ENCODE measurements at regions of chr7 and their contacts with region 1.

Region 1: DNA sequence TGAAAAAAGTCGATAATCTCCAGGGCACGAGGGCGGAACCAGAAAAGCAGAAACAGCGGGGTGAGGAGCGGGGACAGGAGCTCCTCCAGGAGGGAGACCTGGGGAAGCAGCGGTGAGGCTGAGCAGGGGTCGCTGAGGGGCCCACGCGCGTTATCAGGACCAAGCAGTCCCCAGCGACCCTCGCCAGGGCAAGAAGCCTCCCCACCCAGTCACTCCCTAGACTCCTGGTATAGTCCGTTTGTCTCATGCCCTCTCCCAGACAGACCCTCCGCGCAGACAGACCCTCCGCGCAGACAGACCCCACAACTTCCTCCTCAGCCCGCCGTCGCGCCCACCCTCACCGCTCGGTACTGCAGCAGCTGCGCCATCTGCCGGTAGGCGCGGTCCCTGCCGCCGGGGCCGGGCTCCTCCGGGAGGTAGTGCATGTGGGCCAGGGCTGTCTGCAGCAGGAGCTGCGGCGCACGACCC is 6.3 kb downstream of the ATG9B start:
- DNase-seq: peak; percentile 83
- ATAC-seq: peak; percentile 68
- H3K4me3 ChIP-seq: peak overlapping the region in 4 of 5 experiments; percentile 34 to 51 (median 42)
- H3K4me3 Mint-ChIP-seq: peak overlapping the region; percentile 91
- H3K27ac ChIP-seq: no peak overlapping the region
- H3K27ac Mint-ChIP-seq: peak overlapping the region; percentile 72
- H3K4me1 ChIP-seq: peaks cover 33 to 44% of the 10 kb centered on the region in 2 donors
- H3K4me1 Mint-ChIP-seq: peaks cover 47% of the 10 kb centered on the region
- H3K27me3 ChIP-seq: peaks cover 0 to 47% (median 21%) of the 10 kb centered on the region in 4 experiments
- H3K27me3 Mint-ChIP-seq: peaks cover 28% of the 10 kb centered on the region
- CTCF ChIP-seq: peak; percentile 98

Region 2: DNA sequence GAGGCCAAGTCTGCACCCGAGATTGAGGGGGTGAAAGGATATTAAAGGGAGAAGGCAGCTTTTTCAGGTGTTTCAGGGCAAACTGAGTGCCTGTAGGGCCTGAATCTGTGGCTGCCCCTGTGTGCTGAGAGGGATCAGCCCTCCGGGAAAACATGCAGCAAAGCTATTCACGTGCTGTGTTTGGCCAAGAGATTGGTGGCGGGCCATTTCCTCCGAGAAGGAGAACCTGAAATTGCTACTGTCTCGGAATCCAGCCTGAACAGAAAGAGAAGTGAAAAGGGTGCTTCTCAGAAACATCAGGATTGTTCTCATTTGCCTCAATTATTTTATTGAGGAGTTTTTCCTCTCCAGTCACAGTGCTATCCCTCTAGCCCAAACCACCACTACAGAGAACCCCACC is 264.7 kb before region 1 on chr7:
- CTCF ChIA-PET with region 1: no interaction called
- POLR2A ChIA-PET with region 1: no interaction called
- intact Hi-C with region 1: no loop called
- DNase-seq: no peak
- ATAC-seq: no peak
- H3K4me3 ChIP-seq: no peak overlapping the region
- H3K4me3 Mint-ChIP-seq: no peak overlapping the region
- H3K27ac ChIP-seq: no peak overlapping the region
- H3K27ac Mint-ChIP-seq: no peak overlapping the region
- H3K4me1 ChIP-seq: peaks cover 10% of the 10 kb centered on the region in 2 donors
- H3K4me1 Mint-ChIP-seq: peaks cover 11% of the 10 kb centered on the region
- H3K27me3 ChIP-seq: peaks cover 0 to 4% (median 0%) of the 10 kb centered on the region in 4 experiments
- H3K27me3 Mint-ChIP-seq: peaks cover 17% of the 10 kb centered on the region
- CTCF ChIP-seq: no peak

Region 3: GRCh38 chr7:150898475-150899011 is 119.4 kb before region 1 on chr7:
- CTCF ChIA-PET with region 1: interaction called, 8 read pairs
- POLR2A ChIA-PET with region 1: no interaction called
- intact Hi-C with region 1: loop called (anchors 1 kb)
- DNase-seq: peak; percentile 79
- ATAC-seq: peak; percentile 70
- H3K4me3 ChIP-seq: peak overlapping the region in 2 of 5 experiments; percentile 29 to 39
- H3K4me3 Mint-ChIP-seq: peak overlapping the region; percentile 51
- H3K27ac ChIP-seq: peak overlapping the region in 1 of 2 donors; percentile 81
- H3K27ac Mint-ChIP-seq: peak overlapping the region; percentile 28
- H3K4me1 ChIP-seq: peaks cover 26 to 55% of the 10 kb centered on the region in 2 donors
- H3K4me1 Mint-ChIP-seq: peaks cover 38% of the 10 kb centered on the region
- H3K27me3 ChIP-seq: peaks cover 0 to 18% (median 9%) of the 10 kb centered on the region in 4 experiments
- H3K27me3 Mint-ChIP-seq: peaks cover 44% of the 10 kb centered on the region
- CTCF ChIP-seq: peak; percentile 96

Region 4: DNA sequence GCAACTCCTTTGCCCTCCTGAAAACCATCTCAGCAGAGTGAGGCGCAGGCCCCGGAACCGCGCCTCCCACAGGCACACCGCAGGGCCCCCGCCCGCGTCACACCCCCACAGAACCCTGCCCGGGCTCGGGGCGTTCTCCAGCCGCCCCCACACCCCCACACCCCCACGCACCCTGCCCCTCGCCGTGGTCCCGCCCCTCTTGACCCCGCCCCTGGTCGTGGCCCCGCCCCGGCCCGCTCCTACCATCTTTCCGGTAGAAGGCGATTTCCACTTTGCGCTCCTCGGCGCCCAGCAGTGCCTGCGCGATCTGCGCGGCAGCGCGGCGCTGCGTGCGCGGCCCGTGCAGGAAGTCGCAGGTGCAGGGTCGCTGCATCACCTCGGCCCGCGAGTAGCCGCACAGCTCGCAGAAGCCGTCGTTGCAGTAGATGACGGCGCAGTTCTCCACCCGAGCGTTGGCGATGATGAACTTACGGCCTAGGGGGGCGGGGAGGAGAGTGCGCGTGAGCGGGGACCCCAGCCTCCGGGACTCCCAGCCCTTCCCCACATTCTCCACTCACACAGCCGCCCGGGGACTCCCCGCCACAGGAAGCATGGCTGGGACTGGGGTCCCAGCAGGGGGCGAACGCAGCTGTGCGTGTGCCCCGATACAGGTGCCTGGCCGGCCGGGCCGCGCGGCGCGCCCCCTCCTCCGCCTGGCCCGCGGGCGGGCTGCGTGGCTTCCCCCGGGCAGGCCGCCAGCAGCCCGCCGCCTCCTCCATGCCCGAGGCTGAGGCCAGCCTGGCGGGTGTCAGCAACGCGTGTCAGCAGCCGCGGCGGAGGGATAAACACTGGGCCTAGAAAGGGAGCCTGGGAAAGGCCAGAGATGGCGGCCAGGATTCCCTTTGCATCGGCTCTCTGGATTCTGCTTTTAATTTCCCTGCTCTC is 43.3 kb before region 1 on chr7:
- CTCF ChIA-PET with region 1: interaction called, 7 read pairs
- POLR2A ChIA-PET with region 1: no interaction called
- intact Hi-C with region 1: loop called (anchors 2 kb)
- DNase-seq: peak; percentile 81
- ATAC-seq: peak; percentile 71
- H3K4me3 ChIP-seq: peak overlapping the region; percentile 21 to 74 (median 60)
- H3K4me3 Mint-ChIP-seq: peak overlapping the region; percentile 94
- H3K27ac ChIP-seq: peak overlapping the region in 1 of 2 donors; percentile 64
- H3K27ac Mint-ChIP-seq: peak overlapping the region; percentile 87
- H3K4me1 ChIP-seq: peaks cover 37 to 42% of the 10 kb centered on the region in 2 donors
- H3K4me1 Mint-ChIP-seq: peaks cover 43% of the 10 kb centered on the region
- H3K27me3 ChIP-seq: peaks cover 0 to 41% (median 28%) of the 10 kb centered on the region in 4 experiments
- H3K27me3 Mint-ChIP-seq: peaks cover 19% of the 10 kb centered on the region
- CTCF ChIP-seq: peak; percentile 33

Region 5: DNA sequence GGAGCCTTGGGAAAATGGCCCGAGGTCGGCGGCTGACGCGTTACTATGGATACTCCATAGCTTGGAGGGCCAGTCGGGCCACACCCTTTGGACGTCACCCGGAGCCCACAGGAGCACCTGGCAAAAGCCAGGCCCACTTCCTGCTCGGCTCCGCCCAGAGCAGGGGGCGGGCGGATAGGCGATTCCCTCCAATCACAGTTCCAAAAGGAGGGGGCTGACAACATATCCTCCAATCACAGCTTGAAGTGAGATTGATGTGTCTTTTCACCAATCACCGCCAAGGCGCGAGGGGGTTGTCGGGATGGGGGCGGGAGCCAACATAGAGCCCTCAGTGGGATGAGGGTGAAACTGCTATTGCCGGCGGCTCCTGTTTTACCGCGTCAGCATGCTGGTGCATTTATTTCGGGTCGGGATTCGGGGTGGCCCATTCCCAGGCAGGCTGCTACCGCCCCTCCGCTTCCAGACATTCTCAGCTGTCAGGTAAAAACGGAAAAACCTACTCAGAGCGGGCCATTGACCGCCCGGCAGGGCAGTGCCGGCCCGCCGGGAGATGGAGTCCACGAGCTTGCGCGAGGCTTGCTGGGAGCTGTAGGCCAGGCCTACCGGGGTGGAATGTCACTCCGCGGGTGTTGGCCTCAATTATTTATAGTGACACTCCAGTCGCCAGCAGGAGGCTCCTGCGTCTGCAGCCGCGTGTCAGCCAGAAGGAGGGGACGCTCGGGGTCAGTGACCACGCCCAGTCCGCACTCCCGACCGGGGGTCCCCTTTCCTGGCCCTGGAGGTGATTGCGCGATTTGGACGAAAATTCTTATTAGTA is 10.4 kb after region 1 on chr7 and contains the start of gene ABCB8:
- CTCF ChIA-PET with region 1: interaction called, 25 read pairs
- POLR2A ChIA-PET with region 1: interaction called, 12 read pairs
- intact Hi-C with region 1: loop called (anchors 1 kb)
- DNase-seq: peak; percentile 99
- ATAC-seq: peak; percentile 92
- H3K4me3 ChIP-seq: peak within 1 kb of the TSS; percentile 54 to 86 (median 78)
- H3K4me3 Mint-ChIP-seq: peak within 1 kb of the TSS; percentile 97
- H3K27ac ChIP-seq: peak within 1 kb of the TSS; percentile 95 to 96
- H3K27ac Mint-ChIP-seq: peak within 1 kb of the TSS; percentile 99
- H3K4me1 ChIP-seq: peaks cover 11 to 17% of the 10 kb centered on the region in 2 donors
- H3K4me1 Mint-ChIP-seq: peaks cover 23% of the 10 kb centered on the region
- H3K27me3 ChIP-seq: peaks cover 0 to 20% (median 7%) of the 10 kb centered on the region in 4 experiments
- H3K27me3 Mint-ChIP-seq: peaks cover 7% of the 10 kb centered on the region
- CTCF ChIP-seq: peak; percentile 25
- total RNA-seq, gene ABCB8: 64.7 and 69.7 TPM in 2 replicates

Region 6: DNA sequence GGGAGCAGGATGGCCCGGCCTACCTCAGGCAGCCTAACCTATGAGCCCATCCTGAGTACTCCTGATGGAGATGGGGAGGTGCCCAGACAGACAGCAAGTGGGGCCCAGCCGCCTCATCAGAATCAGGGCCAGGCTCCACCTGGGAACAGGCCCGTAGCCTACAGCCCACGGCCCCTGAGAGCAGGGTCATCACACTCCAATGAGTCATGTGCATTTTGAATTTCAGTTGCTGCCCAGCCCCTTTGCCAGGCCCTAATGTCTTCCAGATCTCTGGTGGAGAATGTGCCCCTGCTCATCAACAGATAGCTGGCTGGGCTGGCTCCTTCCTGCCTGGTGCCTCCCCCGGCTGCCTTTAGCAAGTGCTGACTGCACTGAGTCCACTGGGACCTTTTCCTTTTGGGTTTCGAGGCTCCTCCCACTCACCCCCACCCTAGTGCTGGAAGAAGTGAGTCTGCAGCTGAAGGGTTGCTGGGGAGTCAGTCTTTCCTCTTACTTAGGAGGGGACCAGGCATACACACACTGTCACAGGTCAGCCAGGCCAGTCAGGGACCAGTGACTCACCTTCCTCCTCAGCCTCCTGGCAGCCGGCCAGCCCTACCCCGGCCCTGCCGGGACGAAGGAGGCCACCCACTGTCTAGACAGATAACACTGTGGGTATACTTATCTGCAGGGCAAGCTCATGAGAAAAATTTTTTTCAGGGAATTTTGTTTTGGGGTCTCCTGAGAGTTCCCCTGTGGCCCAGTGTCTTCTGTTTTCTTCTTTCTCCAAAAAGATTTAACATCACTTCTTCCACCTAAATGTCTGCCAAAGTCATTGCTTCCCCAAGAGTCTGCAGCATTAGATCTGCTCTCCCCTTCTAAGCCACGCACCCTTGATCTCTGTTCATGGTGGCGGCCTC is 21.2 kb after region 1 on chr7:
- CTCF ChIA-PET with region 1: no interaction called
- POLR2A ChIA-PET with region 1: no interaction called
- intact Hi-C with region 1: no loop called
- DNase-seq: no peak
- ATAC-seq: no peak
- H3K4me3 ChIP-seq: no peak overlapping the region
- H3K4me3 Mint-ChIP-seq: no peak overlapping the region
- H3K27ac ChIP-seq: no peak overlapping the region
- H3K27ac Mint-ChIP-seq: no peak overlapping the region
- H3K4me1 ChIP-seq: no peaks in the 10 kb centered on the region
- H3K4me1 Mint-ChIP-seq: no peaks in the 10 kb centered on the region
- H3K27me3 ChIP-seq: no peaks in the 10 kb centered on the region
- H3K27me3 Mint-ChIP-seq: no peaks in the 10 kb centered on the region
- CTCF ChIP-seq: no peak

Region 7: DNA sequence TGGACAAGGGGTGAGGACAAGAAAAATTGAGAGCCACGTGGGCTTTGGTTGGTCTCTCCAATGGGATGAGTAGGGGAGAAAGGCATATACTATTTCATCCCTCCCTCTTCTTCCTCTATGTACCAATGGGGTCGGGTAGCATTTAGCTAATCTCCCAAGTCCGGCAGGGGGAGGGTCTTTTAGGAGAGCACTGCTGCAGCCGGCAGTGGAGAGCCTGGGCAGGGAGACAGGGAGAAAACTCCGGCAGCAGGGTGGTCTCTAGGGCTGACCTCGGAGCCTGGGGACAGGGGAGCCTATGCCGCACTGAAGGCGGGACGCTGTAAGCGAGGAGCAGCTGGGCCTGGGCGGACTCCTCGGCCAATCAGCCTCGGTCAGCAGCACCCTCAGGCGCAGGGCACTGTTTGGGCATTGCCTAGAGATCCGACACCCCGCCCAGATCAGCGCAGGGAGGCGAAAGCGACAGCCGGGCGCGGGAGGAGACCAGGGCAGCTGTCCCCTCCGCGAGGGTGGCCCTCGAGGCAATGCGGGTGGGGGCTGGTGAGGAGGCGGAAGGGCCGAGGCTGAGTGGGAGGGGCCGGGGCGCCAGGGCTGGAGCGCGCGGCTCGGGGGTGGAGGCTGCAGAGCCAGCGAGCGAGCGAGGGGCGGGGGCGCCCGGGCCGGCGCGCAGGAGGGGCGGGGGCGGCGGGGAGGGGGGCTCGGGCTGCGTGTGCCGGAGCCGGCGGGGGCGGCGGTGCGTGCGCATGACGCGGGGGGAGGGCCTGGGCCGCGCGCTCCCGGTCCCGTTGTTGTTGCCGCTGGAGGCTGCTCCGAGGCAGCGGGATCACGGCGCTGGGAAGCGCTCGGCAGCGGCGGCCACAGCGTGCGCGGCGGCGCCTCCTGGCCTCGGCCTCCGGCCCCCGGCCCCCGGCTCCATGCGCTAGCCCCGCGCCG is 68.0 kb after region 1 on chr7 and contains the start of gene AGAP3:
- CTCF ChIA-PET with region 1: interaction called, 3 read pairs
- POLR2A ChIA-PET with region 1: interaction called, 4 read pairs
- intact Hi-C with region 1: loop called (anchors 5 kb)
- DNase-seq: peak; percentile 59
- ATAC-seq: peak; percentile 40
- H3K4me3 ChIP-seq: peak within 1 kb of the TSS in 4 of 5 experiments; percentile 47 to 75 (median 68)
- H3K4me3 Mint-ChIP-seq: peak within 1 kb of the TSS; percentile 91
- H3K27ac ChIP-seq: peak within 1 kb of the TSS in 1 of 2 donors; percentile 33
- H3K27ac Mint-ChIP-seq: peak within 1 kb of the TSS; percentile 77
- H3K4me1 ChIP-seq: peaks cover 58 to 59% of the 10 kb centered on the region in 2 donors
- H3K4me1 Mint-ChIP-seq: peaks cover 48% of the 10 kb centered on the region
- H3K27me3 ChIP-seq: peaks cover 0 to 54% (median 17%) of the 10 kb centered on the region in 4 experiments
- H3K27me3 Mint-ChIP-seq: peaks cover 23% of the 10 kb centered on the region
- CTCF ChIP-seq: no peak
- total RNA-seq, gene AGAP3: 20.2 and 21.1 TPM in 2 replicates

Region 8: GRCh38 chr7:151226875-151227782 is 209.1 kb after region 1 on chr7 and contains the start of gene ABCF2:
- CTCF ChIA-PET with region 1: no interaction called
- POLR2A ChIA-PET with region 1: no interaction called
- intact Hi-C with region 1: loop called (anchors 2 kb)
- DNase-seq: peak; percentile 97
- ATAC-seq: peak; percentile 99
- H3K4me3 ChIP-seq: peak within 1 kb of the TSS; percentile 60 to 97 (median 81)
- H3K4me3 Mint-ChIP-seq: peak within 1 kb of the TSS; percentile 95
- H3K27ac ChIP-seq: peak within 1 kb of the TSS; percentile 39 to 73
- H3K27ac Mint-ChIP-seq: peak within 1 kb of the TSS; percentile 92
- H3K4me1 ChIP-seq: peaks cover 23 to 26% of the 10 kb centered on the region in 2 donors
- H3K4me1 Mint-ChIP-seq: peaks cover 48% of the 10 kb centered on the region
- H3K27me3 ChIP-seq: no peaks in the 10 kb centered on the region
- H3K27me3 Mint-ChIP-seq: no peaks in the 10 kb centered on the region
- CTCF ChIP-seq: no peak
- total RNA-seq, gene ABCF2: 27.1 and 30.2 TPM in 2 replicates

Measured in B cell (primary cell).